Activated naive CD4-positive, alpha-beta T cell treated with anti-CD3 and anti-CD28 coated beads, Interleukin-2, amount 10 ng/mL, durations not matched to agents 7 days and 5 days (primary cell): ENCODE measurements at regions of chr1 and their contacts with region 1.

Region 1: DNA sequence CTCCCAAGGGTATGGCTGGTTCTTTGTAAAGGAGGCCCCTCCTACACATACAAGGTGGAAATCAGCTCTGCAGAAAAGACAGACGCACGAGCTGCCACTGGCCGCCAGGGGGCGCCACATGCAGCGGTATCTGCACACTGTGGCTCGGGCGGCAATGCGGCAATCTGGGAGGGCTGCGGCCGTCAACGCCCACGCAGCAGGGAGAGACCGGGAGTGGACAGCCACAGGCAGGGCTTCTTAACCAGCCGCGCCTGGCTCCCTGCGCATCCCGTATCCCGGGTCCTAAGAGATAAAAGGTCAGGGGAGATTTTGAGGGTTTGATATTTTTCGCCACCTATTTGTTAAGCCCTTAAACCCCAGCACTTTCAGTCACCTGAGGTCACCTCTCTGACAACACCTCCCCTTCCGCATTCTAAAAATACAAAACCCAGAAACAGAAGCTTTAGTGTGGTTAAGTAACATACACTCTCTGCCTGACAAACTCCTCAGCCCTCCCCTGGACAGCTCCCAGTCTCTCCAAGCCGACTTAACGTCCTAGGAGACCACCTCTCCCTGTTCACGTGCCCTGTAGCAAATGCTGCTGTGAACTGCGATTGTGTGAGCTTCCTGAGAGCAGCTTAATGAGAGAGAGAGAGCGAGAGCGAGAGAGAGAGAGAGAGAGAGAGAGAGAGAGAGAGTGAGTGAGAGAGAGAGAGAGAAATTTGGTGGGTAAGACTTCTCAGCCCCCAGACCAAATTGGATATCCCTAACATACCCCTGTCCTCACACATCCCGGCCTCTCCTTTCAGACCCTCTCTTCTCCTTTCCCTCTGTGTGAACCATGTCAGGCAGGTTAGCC is 13.5 kb upstream of the KCNA2 start:
- DNase-seq: peak; percentile 93
- H3K4me3 Mint-ChIP-seq: peak overlapping the region; percentile 82
- H3K27ac Mint-ChIP-seq: peak overlapping the region; percentile 98
- H3K4me1 Mint-ChIP-seq: peaks cover 54% of the 10 kb centered on the region
- H3K27me3 Mint-ChIP-seq: peaks cover 8% of the 10 kb centered on the region

Region 2: DNA sequence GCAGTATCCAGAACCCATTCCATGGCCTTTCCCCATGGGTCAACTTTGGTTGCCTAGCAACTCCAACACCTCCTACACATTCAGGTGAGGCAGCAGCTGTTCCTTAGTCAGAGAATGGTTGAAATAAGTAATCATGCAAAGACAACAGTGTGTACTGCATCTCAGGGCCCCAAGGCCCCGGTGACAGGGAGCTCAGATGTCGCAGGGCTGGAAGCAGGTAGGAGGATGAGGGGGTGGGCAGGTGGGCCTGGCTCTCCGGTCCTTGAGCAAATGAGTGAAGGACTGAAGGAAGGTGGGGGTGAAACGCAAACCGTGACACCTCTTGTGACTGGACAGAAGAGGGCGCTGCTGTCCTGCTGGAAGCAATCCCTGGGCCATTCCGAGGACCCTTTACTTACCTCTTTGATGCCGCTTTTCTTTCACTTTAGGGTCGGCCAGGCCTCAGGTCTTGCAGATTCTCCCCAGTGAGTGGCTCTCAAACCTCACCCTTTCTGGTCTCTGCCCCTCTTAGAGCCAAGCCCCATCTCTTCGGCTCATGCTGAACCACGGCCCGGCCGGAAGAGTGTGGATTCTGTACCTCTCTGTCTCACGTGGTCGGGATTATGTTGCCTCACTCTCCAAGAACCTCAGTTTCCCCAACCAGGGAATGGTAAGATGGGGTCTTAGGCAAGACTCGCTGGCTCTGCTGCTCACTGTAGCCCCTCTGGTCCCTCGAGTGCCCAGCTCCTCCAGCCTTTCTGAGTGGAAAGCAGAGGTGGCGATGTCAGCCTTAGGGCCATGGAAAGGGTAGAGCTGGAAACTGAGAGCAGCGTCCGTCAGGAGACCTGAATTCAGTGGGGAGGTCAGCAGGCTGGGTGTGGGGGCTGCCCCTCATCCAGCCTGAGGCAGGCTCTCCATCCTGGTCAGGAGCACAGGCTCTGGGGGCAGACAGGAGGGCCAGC is 95.0 kb before region 1 on chr1:
- CTCF ChIA-PET with region 1: interaction called, 12 read pairs
- DNase-seq: peak; percentile 69
- H3K4me3 Mint-ChIP-seq: no peak overlapping the region
- H3K27ac Mint-ChIP-seq: no peak overlapping the region
- H3K4me1 Mint-ChIP-seq: no peaks in the 10 kb centered on the region
- H3K27me3 Mint-ChIP-seq: peaks cover 79% of the 10 kb centered on the region

Region 3: GRCh38 chr1:110554871-110555801 is 64.5 kb before region 1 on chr1:
- CTCF ChIA-PET with region 1: interaction called, 14 read pairs
- DNase-seq: peak; percentile 69
- H3K4me3 Mint-ChIP-seq: peak overlapping the region; percentile 17
- H3K27ac Mint-ChIP-seq: no peak overlapping the region
- H3K4me1 Mint-ChIP-seq: peaks cover 5% of the 10 kb centered on the region
- H3K27me3 Mint-ChIP-seq: peaks cover 93% of the 10 kb centered on the region

Region 4: GRCh38 chr1:110630839-110631663 is 11.4 kb after region 1 on chr1:
- CTCF ChIA-PET with region 1: interaction called, 38 read pairs
- DNase-seq: peak; percentile 91
- H3K4me3 Mint-ChIP-seq: no peak overlapping the region
- H3K27ac Mint-ChIP-seq: no peak overlapping the region
- H3K4me1 Mint-ChIP-seq: peaks cover 35% of the 10 kb centered on the region
- H3K27me3 Mint-ChIP-seq: no peaks in the 10 kb centered on the region

Region 5: GRCh38 chr1:110668549-110668948 is 48.9 kb after region 1 on chr1:
- CTCF ChIA-PET with region 1: interaction called, 15 read pairs
- DNase-seq: peak; percentile 25
- H3K4me3 Mint-ChIP-seq: peak overlapping the region; percentile 76
- H3K27ac Mint-ChIP-seq: peak overlapping the region; percentile 92
- H3K4me1 Mint-ChIP-seq: peaks cover 19% of the 10 kb centered on the region
- H3K27me3 Mint-ChIP-seq: peaks cover 5% of the 10 kb centered on the region

Region 6: GRCh38 chr1:110674337-110675059 is 54.9 kb after region 1 on chr1 and contains the start of gene KCNA3:
- CTCF ChIA-PET with region 1: interaction called, 10 read pairs
- DNase-seq: peak; percentile 82
- H3K4me3 Mint-ChIP-seq: peak within 1 kb of the TSS; percentile 95
- H3K27ac Mint-ChIP-seq: peak within 1 kb of the TSS; percentile 98
- H3K4me1 Mint-ChIP-seq: peaks cover 41% of the 10 kb centered on the region
- H3K27me3 Mint-ChIP-seq: peaks cover 10% of the 10 kb centered on the region

Region 7: DNA sequence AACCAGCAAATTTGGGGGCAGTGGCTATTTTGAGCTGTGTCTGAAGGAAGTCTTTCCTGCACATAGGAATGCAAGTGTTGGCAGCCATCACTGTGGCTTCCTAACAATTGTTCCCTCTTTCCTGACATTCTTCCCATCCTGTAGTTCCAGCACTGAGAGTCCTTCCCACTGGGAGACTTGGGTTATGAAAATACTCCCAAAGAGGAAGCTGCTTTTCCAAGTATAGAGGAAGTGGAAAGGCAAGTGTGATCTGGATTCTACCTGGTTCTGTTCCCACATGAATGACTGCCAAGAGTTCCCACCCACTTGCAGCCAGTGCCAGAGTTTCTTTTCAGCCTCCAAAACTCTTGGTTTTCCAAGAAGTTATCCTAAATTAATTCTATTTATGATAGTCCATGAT is 154.8 kb after region 1 on chr1:
- CTCF ChIA-PET with region 1: interaction called, 185 read pairs
- DNase-seq: no peak
- H3K4me3 Mint-ChIP-seq: no peak overlapping the region
- H3K27ac Mint-ChIP-seq: no peak overlapping the region
- H3K4me1 Mint-ChIP-seq: no peaks in the 10 kb centered on the region
- H3K27me3 Mint-ChIP-seq: peaks cover 54% of the 10 kb centered on the region